Ovary (tissue), 10 donors: ENCODE measurements at regions of chr3 and their contacts with region 1.

Region 1: DNA sequence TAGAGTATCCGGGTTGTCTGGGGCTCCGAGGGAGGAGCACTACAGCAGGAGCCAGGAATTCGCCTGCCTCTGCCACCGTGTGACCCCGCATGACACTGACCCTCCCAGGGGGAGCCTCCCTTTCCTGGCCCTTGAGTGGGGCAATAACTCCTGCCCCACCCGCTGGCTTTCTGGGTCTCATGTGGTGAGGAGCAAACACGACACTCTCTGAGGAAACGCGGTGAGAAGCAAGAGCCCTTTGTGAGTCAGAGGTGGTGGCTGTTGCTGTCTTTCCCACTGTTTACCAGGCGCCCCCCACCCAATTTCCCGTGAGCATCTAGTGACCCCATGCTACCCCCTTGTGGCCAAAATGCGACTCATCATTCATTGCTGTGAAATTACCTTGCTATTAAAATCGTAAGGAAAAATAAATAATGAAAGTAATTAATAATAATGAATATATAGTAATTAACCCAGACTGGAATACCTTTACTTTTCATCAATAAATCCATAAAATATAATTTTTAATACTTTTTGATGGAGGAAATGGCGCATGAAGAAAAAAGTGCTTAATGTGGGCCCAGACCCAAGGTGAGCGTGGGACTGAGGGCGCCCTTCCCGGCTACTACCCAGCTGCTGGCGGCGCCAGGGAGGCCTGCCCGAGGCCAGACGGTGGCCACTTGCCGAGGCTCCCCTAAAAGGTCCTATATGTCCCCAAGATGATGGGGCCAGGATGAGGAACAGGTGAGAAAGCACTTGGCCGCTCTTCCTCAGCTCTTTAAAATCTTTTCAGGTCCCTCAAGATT is 29.3 kb downstream of the CCNL1 start:
- DNase-seq: peak; percentile 35 to 60 (median 54)
- H3K4me3 ChIP-seq: no peak overlapping the region
- H3K27ac ChIP-seq: peak overlapping the region; percentile 26 to 38
- H3K4me1 ChIP-seq: peaks cover 10% of the 10 kb centered on the region
- H3K27me3 ChIP-seq: no peaks in the 10 kb centered on the region
- CTCF ChIP-seq: peak in 2 of 3 donors; percentile 30 to 58
- EP300 ChIP-seq: no peak
- POLR2A ChIP-seq: no peak

Region 2: GRCh38 chr3:156040041-156040440 is 1090.6 kb before region 1 on chr3:
- intact Hi-C with region 1: loop called in 1 of 4 experiments (anchors 10 kb)
- DNase-seq: no peak
- H3K4me3 ChIP-seq: no peak overlapping the region
- H3K27ac ChIP-seq: no peak overlapping the region
- H3K4me1 ChIP-seq: no peaks in the 10 kb centered on the region
- H3K27me3 ChIP-seq: no peaks in the 10 kb centered on the region
- CTCF ChIP-seq: no peak
- EP300 ChIP-seq: no peak
- POLR2A ChIP-seq: no peak

Region 3: DNA sequence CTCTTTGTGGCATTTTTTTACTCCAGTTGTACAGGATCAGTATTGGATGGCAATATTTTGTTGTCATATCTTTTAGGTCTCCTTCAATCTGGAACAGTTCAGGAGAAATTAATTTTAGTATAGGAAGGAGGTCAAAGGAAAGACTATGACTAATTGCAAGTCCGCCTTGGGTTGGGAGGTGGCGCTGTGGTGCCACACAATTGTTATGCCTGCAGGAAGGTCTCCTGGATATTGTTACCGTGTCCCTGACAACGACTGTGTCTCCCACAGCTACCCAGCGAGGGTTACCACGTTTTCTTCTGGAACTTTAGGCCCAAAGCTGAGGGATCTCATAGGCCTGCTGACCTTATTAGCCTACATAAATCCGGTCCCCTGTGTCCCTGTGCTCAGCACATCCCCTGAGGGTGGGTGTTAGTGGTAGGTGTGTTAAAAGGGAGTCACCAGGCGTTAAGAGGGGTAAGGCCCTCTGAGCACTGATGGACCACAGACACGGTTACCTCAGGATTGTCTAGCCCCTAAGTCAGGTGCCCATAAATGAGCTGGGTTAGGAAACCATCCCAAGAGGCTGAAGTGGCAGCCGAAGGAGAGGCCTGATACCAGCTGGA is 978.7 kb before region 1 on chr3:
- intact Hi-C with region 1: loop called in 1 of 4 experiments (anchors 10 kb)
- DNase-seq: peak; percentile 38 to 73 (median 47)
- H3K4me3 ChIP-seq: no peak overlapping the region
- H3K27ac ChIP-seq: no peak overlapping the region
- H3K4me1 ChIP-seq: peaks cover 11% of the 10 kb centered on the region
- H3K27me3 ChIP-seq: no peaks in the 10 kb centered on the region
- CTCF ChIP-seq: peak in 2 of 3 donors; percentile 14 to 51
- EP300 ChIP-seq: no peak
- POLR2A ChIP-seq: no peak

Region 4: GRCh38 chr3:156535162-156535627 is 595.5 kb before region 1 on chr3:
- intact Hi-C with region 1: loop called in 1 of 4 experiments (anchors 10 kb)
- DNase-seq: peak; percentile 51 to 71 (median 60)
- H3K4me3 ChIP-seq: no peak overlapping the region
- H3K27ac ChIP-seq: peak overlapping the region in 1 of 2 donors; percentile 17
- H3K4me1 ChIP-seq: peaks cover 2% of the 10 kb centered on the region
- H3K27me3 ChIP-seq: no peaks in the 10 kb centered on the region
- CTCF ChIP-seq: peak in 2 of 3 donors; percentile 12 to 38
- EP300 ChIP-seq: peak; percentile 20
- POLR2A ChIP-seq: no peak

Region 5: GRCh38 chr3:156816800-156817645 is 313.6 kb before region 1 on chr3:
- intact Hi-C with region 1: loop called in 2 of 4 experiments (anchors 5 to 10 kb)
- DNase-seq: peak; percentile 75 to 87 (median 77)
- H3K4me3 ChIP-seq: peak overlapping the region; percentile 44
- H3K27ac ChIP-seq: peak overlapping the region; percentile 62 to 66
- H3K4me1 ChIP-seq: no peaks in the 10 kb centered on the region
- H3K27me3 ChIP-seq: no peaks in the 10 kb centered on the region
- CTCF ChIP-seq: no peak
- EP300 ChIP-seq: peak; percentile 56
- POLR2A ChIP-seq: no peak

Region 6: DNA sequence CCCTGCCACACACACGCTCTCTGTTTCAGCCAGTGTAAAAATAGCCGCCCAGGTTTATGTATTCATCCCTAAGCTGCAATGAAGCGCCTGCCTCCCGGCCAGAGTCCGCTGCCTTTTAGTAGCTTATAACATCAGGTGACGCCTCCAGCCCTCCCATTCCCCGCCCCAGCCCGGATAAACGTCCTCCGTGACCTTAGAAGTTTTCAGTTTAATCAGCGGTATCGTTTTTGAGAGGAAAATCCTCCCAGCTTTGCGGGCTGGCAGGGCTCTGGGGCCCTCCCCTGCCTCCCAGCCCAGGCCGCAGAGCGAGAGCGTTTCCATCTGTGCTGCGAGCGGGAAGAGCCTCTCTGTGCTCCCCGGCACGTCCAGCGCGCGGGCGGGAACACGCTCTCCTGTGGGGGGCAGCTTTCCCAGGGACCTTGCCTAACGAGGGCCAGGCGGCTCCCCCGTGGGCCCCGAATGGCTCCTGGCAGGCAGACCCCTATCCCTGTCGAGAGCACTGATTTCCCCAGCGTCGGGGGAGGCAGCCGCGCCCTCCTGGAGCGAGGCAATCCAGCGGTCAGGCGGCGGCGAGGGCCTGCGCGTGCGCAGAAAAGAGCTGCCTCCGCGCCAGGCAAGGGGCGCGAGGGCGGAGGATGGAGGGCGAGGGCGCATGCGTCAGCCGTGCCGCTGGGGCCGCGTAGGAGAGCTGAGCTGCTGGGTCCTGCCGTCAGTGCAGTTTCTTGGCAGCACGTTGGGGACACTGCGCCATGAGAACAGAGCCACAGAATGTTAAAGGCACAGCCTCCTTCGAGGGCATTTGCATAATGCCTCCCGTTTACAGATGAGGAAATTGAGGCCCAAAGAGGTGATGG is 41.8 kb before region 1 on chr3:
- intact Hi-C with region 1: loop called (anchors 2 to 5 kb)
- DNase-seq: peak; percentile 96 to 98 (median 98)
- H3K4me3 ChIP-seq: peak overlapping the region; percentile 48
- H3K27ac ChIP-seq: peak overlapping the region; percentile 86 to 97
- H3K4me1 ChIP-seq: peaks cover 6% of the 10 kb centered on the region
- H3K27me3 ChIP-seq: no peaks in the 10 kb centered on the region
- CTCF ChIP-seq: peak in 2 of 3 donors; percentile 6 to 21
- EP300 ChIP-seq: peak; percentile 69
- POLR2A ChIP-seq: peak; percentile 91

Region 7: DNA sequence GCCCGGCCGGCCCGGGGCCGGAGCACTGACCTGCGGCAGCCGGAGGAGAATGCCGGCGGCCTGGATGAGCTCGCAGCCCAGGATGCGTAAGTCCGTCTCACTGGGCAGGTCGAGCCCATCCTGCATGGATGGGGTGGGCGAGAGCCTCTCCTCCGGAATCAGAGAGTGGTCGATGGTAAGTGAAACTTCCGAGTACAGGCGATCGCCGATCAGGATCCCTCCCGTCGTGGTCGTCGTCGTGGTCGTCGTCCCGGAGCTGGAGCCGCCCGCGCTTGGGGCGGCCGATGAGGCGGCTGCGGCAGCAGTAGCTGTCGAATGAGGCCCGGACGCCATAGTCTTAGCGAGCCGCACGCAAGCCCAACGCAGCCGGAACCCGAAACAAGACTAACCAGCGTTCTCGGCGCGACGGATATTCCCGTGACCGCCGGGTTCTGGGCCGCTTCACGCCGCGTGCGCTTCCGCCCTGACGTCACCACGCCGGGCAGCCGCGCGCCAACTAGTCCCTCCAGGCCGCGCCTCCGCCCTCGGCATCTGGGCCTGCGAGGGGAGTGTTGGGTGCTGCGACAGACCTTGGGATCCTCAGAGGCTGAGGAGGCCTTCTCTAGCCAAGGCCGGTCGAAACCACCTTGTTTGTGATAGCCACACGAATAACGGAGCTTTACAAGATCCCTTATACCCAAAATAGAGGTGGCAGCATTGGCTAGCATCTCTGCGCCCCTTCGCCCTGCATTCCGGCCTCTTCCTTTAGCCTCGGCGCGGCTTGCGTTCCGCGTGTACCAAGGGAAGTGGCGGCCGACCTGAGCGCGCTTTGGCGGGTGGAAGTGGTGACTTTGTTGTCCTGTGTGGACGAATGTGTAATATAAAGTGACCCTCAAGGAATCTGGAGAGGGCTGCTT is 29.4 kb after region 1 on chr3 and contains the start of gene CCNL1:
- intact Hi-C with region 1: no loop called
- DNase-seq: peak; percentile 97 to 99 (median 98)
- H3K4me3 ChIP-seq: peak within 1 kb of the TSS; percentile 99
- H3K27ac ChIP-seq: peak within 1 kb of the TSS; percentile 99
- H3K4me1 ChIP-seq: peaks cover 3% of the 10 kb centered on the region
- H3K27me3 ChIP-seq: no peaks in the 10 kb centered on the region
- CTCF ChIP-seq: peak in 1 of 3 donors; percentile 51
- EP300 ChIP-seq: peak; percentile 90
- POLR2A ChIP-seq: peak; percentile 100
- total RNA-seq, gene CCNL1: 86.8 to 514 (median 115) TPM